ENCODE measurements at regions of chr12 and their contacts with region 1.

Region 1: DNA sequence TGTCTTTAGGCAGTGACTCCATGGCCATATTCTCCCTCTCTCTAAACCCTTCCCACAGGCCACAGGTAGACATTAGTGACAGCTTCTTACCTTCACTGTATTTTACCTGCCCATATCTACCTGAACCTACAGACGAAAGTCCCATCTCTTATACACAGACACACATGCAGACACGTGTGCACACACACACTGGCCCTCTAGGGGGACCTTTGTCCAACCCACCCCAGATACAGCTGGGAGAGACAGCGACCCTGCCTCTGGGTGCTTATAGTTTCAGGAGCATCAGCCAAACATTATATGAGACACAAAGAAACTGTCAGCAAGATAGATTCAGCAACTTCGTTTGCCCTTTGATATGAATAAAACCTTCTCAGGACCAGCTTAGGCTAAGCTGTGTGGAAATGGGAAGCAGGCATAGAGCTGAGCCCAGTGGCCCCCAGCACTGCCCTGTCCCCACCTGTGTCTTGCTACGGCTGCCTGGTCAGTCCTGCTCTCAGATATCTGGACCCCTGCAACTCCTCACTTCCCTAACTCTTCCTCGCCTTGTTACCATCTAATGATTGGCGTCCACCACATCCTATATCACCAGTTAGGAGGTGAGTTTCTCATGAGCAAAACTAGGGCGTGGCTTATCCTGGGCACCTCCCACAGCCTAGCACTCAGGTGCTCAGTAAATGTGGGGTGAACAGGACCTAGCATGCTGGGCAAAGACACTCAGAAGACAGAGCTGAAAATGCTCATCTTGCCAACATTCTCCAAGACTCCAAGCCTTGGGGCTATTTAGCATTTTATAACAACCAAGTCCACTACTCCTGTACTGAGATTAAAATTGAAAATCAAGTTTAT is 12.0 kb upstream of the CD9 start:
- DNase-seq: no peak
- H3K4me3 ChIP-seq: no peak overlapping the region
- H3K27ac ChIP-seq: no peak overlapping the region
- H3K4me1 ChIP-seq: peaks cover 0 to 5% of the 10 kb centered on the region in 2 donors
- H3K27me3 ChIP-seq: no peaks in the 10 kb centered on the region
- CTCF ChIP-seq: no peak
- POLR2A ChIP-seq: no peak

Region 2: GRCh38 chr12:6062757-6063735 is 125.1 kb before region 1 on chr12:
- intact Hi-C with region 1: loop called (anchors 5 kb)
- DNase-seq: peak; percentile 42 to 49
- H3K4me3 ChIP-seq: no peak overlapping the region
- H3K27ac ChIP-seq: no peak overlapping the region
- H3K4me1 ChIP-seq: peaks cover 0 to 10% of the 10 kb centered on the region in 2 donors
- H3K27me3 ChIP-seq: no peaks in the 10 kb centered on the region
- CTCF ChIP-seq: peak; percentile 65 to 91 (median 86)
- POLR2A ChIP-seq: no peak

Region 3: GRCh38 chr12:6700646-6701051 is 512.5 kb after region 1 on chr12 and contains the start of gene PIANP:
- intact Hi-C with region 1: no loop called
- DNase-seq: peak in 1 of 2 donors; percentile 15
- H3K4me3 ChIP-seq: peak within 1 kb of the TSS in 1 of 3 donors; percentile 27
- H3K27ac ChIP-seq: no peak within 1 kb of the TSS
- H3K4me1 ChIP-seq: peaks cover 7 to 16% of the 10 kb centered on the region in 2 donors
- H3K27me3 ChIP-seq: peaks cover 23% of the 10 kb centered on the region
- CTCF ChIP-seq: no peak
- POLR2A ChIP-seq: no peak
- total RNA-seq, gene PIANP: 0.11 to 0.39 TPM in 2 of 4 donors, not detected in the others

Measured in thyroid gland (tissue), 4 donors.